Naive thymus-derived CD4-positive, alpha-beta T cell (primary cell): ENCODE measurements at regions of chrX and their contacts with region 1.

Region 1: DNA sequence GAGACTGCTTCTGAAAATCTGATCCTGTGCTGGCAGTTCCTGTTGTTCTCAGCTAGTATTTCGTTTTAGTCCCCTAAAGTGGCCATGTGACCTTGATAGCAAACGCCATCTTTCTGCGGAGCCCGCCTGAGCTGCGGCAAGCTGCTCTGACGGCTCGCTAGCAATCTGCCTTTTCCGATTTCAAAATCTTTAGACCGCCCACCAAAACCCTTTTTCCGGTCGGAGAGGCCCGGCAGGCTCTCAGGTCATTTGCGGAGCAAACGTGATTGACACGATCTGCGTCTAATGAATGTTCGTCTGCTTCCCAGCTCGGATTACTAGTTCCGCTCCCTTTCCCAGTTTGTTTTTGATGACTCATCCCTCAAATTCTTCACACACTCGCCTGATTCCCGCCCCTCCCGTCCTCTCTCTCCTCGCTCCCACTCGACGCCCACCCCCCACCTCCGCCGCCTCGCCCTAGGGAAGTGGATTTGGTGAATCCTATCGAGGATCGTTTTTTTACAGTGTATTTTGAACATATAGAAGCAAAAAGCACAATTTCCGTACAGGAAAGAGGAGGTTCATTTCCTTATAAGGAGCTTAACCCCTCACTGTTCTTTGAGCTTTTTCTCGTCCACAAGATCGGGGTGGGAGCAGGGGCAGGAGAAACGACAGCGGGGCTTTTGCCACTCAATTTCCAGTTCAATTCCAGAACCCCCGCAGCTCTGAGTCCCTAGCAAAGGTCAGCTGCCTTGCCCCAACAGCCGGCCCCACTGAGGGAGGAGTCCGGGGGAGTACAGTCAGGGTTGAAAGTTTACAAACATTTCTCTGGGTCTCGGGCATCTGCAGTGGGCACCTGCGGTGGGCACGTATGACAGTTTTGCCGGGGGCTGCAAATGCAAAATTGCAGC is 37.5 kb downstream of the NLGN3 start:
- DNase-seq: peak; percentile 42 to 86 (median 80)
- ATAC-seq: peak; percentile 95
- H3K4me3 ChIP-seq: peak overlapping the region; percentile 85
- H3K4me3 Mint-ChIP-seq: peak overlapping the region; percentile 83 to 98 (median 96)
- H3K27ac ChIP-seq: peak overlapping the region; percentile 94
- H3K27ac Mint-ChIP-seq: peak overlapping the region; percentile 95 to 100 (median 98)
- H3K4me1 ChIP-seq: peaks cover 0 to 10% of the 10 kb centered on the region in 2 donors
- H3K4me1 Mint-ChIP-seq: peaks cover 0 to 28% (median 21%) of the 10 kb centered on the region in 7 donors
- H3K27me3 ChIP-seq: no peaks in the 10 kb centered on the region
- H3K27me3 Mint-ChIP-seq: no peaks in the 10 kb centered on the region

Region 2: GRCh38 chrX:70769659-70770232 is 412.4 kb before region 1 on chrX:
- CTCF ChIA-PET with region 1: interaction called, 3 read pairs
- POLR2A ChIA-PET with region 1: no interaction called
- intact Hi-C with region 1: loop called in 1 of 2 experiments (anchors 1 kb)
- DNase-seq: peak in 1 of 9 donors; percentile 0
- ATAC-seq: no peak
- H3K4me3 ChIP-seq: no peak overlapping the region
- H3K4me3 Mint-ChIP-seq: no peak overlapping the region
- H3K27ac ChIP-seq: no peak overlapping the region
- H3K27ac Mint-ChIP-seq: no peak overlapping the region
- H3K4me1 ChIP-seq: no peaks in the 10 kb centered on the region
- H3K4me1 Mint-ChIP-seq: no peaks in the 10 kb centered on the region
- H3K27me3 ChIP-seq: no peaks in the 10 kb centered on the region
- H3K27me3 Mint-ChIP-seq: peaks cover 0 to 6% (median 0%) of the 10 kb centered on the region in 5 donors

Region 3: DNA sequence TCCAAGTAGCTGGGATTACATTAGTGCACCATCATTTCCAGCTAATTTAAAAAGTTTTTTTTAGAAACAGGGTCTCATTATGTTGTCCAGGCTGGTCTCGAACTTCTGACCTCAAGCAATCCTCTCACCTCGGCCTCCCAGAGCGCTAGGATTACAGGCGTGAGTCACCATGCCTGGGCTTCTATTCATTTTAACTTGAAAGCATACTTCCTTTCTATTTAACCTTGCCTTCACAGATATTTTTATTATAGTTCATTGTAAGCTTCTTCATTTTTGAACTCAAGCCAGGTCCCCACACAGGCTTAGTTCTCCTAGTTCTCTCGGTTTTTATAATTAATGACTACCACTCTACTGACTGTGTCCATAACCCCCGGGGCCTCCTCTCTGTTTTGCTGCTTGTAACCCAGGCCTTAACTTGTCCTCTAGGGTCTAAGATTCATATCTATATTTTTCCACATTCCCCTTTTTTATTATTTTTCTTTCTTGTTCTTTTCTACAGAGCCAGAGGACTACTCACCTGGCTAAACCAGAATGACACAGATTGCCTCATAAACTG is 164.7 kb before region 1 on chrX:
- CTCF ChIA-PET with region 1: no interaction called
- POLR2A ChIA-PET with region 1: no interaction called
- intact Hi-C with region 1: no loop called
- DNase-seq: no peak
- ATAC-seq: no peak
- H3K4me3 ChIP-seq: no peak overlapping the region
- H3K4me3 Mint-ChIP-seq: no peak overlapping the region
- H3K27ac ChIP-seq: no peak overlapping the region
- H3K27ac Mint-ChIP-seq: no peak overlapping the region
- H3K4me1 ChIP-seq: no peaks in the 10 kb centered on the region
- H3K4me1 Mint-ChIP-seq: no peaks in the 10 kb centered on the region
- H3K27me3 ChIP-seq: no peaks in the 10 kb centered on the region
- H3K27me3 Mint-ChIP-seq: no peaks in the 10 kb centered on the region

Region 4: GRCh38 chrX:71068049-71068763 is 113.9 kb before region 1 on chrX and contains the start of gene SNX12:
- CTCF ChIA-PET with region 1: interaction called, 3 read pairs
- POLR2A ChIA-PET with region 1: interaction called, 5 read pairs
- intact Hi-C with region 1: loop called (anchors 1 kb)
- DNase-seq: peak; percentile 66 to 93 (median 88)
- ATAC-seq: peak; percentile 99
- H3K4me3 ChIP-seq: peak within 1 kb of the TSS; percentile 81
- H3K4me3 Mint-ChIP-seq: peak within 1 kb of the TSS; percentile 76 to 98 (median 94)
- H3K27ac ChIP-seq: peak within 1 kb of the TSS; percentile 86
- H3K27ac Mint-ChIP-seq: peak within 1 kb of the TSS; percentile 90 to 98 (median 97)
- H3K4me1 ChIP-seq: peaks cover 0 to 4% of the 10 kb centered on the region in 2 donors
- H3K4me1 Mint-ChIP-seq: peaks cover 9 to 24% (median 18%) of the 10 kb centered on the region in 7 donors
- H3K27me3 ChIP-seq: no peaks in the 10 kb centered on the region
- H3K27me3 Mint-ChIP-seq: peaks cover 0 to 12% (median 0%) of the 10 kb centered on the region in 5 donors
- total RNA-seq, gene SNX12: 19.0 to 41.6 (median 37.3) TPM

Region 5: GRCh38 chrX:71111141-71111843 is 70.9 kb before region 1 on chrX and contains the start of gene IL2RG:
- CTCF ChIA-PET with region 1: interaction called, 3 read pairs
- POLR2A ChIA-PET with region 1: interaction called, 10 read pairs
- intact Hi-C with region 1: loop called in 1 of 2 experiments (anchors 5 kb)
- DNase-seq: peak; percentile 37 to 92 (median 87)
- ATAC-seq: peak; percentile 95
- H3K4me3 ChIP-seq: peak within 1 kb of the TSS; percentile 80
- H3K4me3 Mint-ChIP-seq: peak within 1 kb of the TSS; percentile 93 to 98 (median 98)
- H3K27ac ChIP-seq: peak within 1 kb of the TSS; percentile 96
- H3K27ac Mint-ChIP-seq: peak within 1 kb of the TSS; percentile 96 to 100 (median 98)
- H3K4me1 ChIP-seq: peaks cover 28 to 39% of the 10 kb centered on the region in 2 donors
- H3K4me1 Mint-ChIP-seq: peaks cover 24 to 69% (median 43%) of the 10 kb centered on the region in 7 donors
- H3K27me3 ChIP-seq: no peaks in the 10 kb centered on the region
- H3K27me3 Mint-ChIP-seq: no peaks in the 10 kb centered on the region
- total RNA-seq, gene IL2RG: 228 to 671 (median 329) TPM

Region 6: DNA sequence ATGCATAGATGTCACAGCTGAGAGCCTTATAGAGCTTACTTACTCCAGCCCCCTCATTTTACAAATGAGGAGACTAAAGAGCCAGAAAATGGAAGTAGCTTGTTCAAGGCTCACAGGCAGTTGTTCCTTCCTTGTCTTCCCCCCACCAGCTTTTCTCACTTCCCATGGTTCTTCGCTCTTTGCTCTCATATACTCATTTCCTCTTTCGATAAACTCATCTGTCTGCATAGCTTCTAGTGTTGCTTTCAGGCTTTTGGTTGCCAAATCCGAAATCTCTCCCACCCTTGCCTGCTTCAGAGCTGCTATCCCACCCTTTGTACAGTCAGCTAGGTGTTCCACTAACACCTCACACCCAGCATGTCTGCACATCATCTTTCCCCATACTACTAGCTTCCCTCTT is 15.9 kb after region 1 on chrX:
- CTCF ChIA-PET with region 1: interaction called, 5 read pairs
- POLR2A ChIA-PET with region 1: interaction called, 50 read pairs
- intact Hi-C with region 1: loop called (anchors 1 kb)
- DNase-seq: peak in 7 of 9 donors; percentile 8 to 40 (median 20)
- ATAC-seq: peak; percentile 69
- H3K4me3 ChIP-seq: peak overlapping the region; percentile 62
- H3K4me3 Mint-ChIP-seq: peak overlapping the region; percentile 79 to 94 (median 90)
- H3K27ac ChIP-seq: peak overlapping the region; percentile 50
- H3K27ac Mint-ChIP-seq: peak overlapping the region; percentile 80 to 94 (median 89)
- H3K4me1 ChIP-seq: peaks cover 0 to 4% of the 10 kb centered on the region in 2 donors
- H3K4me1 Mint-ChIP-seq: peaks cover 18 to 35% (median 25%) of the 10 kb centered on the region in 7 donors
- H3K27me3 ChIP-seq: no peaks in the 10 kb centered on the region
- H3K27me3 Mint-ChIP-seq: no peaks in the 10 kb centered on the region

Region 7: DNA sequence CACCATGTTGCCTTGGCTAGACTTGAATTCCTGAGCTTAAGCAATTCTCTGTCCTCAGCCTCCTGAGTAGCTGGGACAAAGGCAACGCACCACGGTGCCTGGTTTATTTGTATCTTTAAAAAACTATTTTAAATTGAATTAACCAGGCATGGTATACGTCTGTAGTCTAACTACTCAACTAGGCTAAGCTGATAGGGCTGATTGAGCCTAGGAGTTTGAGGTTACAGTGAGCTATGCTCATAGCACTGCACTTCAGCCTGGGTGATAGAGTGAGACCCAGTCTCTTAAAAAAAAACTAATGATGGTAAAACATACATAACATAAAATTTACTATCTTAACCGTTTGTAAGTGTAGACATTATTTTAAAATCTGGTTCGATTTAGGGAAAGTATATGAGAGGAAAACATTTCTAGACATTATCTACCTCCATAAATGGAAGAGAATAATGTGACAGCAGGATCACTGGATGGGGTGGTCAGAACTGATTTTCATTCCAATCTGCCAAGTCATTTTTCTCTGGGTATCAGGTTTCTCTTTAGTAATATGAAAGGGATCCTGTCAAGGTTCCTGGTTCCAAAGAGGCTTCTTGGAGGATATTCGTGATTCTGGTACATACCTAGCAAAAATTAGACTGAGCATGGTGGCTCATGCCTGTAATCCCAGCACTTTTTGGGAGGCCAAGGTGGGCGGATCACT is 110.7 kb after region 1 on chrX:
- CTCF ChIA-PET with region 1: no interaction called
- POLR2A ChIA-PET with region 1: no interaction called
- intact Hi-C with region 1: no loop called
- DNase-seq: no peak
- ATAC-seq: no peak
- H3K4me3 ChIP-seq: no peak overlapping the region
- H3K4me3 Mint-ChIP-seq: no peak overlapping the region
- H3K27ac ChIP-seq: no peak overlapping the region
- H3K27ac Mint-ChIP-seq: no peak overlapping the region
- H3K4me1 ChIP-seq: no peaks in the 10 kb centered on the region
- H3K4me1 Mint-ChIP-seq: peaks cover 4 to 23% (median 14%) of the 10 kb centered on the region in 7 donors
- H3K27me3 ChIP-seq: no peaks in the 10 kb centered on the region
- H3K27me3 Mint-ChIP-seq: no peaks in the 10 kb centered on the region

Region 8: GRCh38 chrX:71365876-71366673 is 183.9 kb after region 1 on chrX and contains the start of gene TAF1:
- CTCF ChIA-PET with region 1: interaction called, 4 read pairs
- POLR2A ChIA-PET with region 1: interaction called, 33 read pairs
- intact Hi-C with region 1: loop called (anchors 1 kb)
- DNase-seq: peak; percentile 61 to 94 (median 90)
- ATAC-seq: peak; percentile 93
- H3K4me3 ChIP-seq: peak within 1 kb of the TSS; percentile 81
- H3K4me3 Mint-ChIP-seq: peak within 1 kb of the TSS; percentile 86 to 99 (median 96)
- H3K27ac ChIP-seq: peak within 1 kb of the TSS; percentile 94
- H3K27ac Mint-ChIP-seq: peak within 1 kb of the TSS; percentile 97 to 100 (median 98)
- H3K4me1 ChIP-seq: peaks cover 5 to 9% of the 10 kb centered on the region in 2 donors
- H3K4me1 Mint-ChIP-seq: peaks cover 12 to 34% (median 27%) of the 10 kb centered on the region in 7 donors
- H3K27me3 ChIP-seq: no peaks in the 10 kb centered on the region
- H3K27me3 Mint-ChIP-seq: no peaks in the 10 kb centered on the region
- total RNA-seq, gene TAF1: 55.4 to 86.7 (median 76.1) TPM